ENCODE measurements at regions of chr1 and their contacts with region 1.

Region 1: DNA sequence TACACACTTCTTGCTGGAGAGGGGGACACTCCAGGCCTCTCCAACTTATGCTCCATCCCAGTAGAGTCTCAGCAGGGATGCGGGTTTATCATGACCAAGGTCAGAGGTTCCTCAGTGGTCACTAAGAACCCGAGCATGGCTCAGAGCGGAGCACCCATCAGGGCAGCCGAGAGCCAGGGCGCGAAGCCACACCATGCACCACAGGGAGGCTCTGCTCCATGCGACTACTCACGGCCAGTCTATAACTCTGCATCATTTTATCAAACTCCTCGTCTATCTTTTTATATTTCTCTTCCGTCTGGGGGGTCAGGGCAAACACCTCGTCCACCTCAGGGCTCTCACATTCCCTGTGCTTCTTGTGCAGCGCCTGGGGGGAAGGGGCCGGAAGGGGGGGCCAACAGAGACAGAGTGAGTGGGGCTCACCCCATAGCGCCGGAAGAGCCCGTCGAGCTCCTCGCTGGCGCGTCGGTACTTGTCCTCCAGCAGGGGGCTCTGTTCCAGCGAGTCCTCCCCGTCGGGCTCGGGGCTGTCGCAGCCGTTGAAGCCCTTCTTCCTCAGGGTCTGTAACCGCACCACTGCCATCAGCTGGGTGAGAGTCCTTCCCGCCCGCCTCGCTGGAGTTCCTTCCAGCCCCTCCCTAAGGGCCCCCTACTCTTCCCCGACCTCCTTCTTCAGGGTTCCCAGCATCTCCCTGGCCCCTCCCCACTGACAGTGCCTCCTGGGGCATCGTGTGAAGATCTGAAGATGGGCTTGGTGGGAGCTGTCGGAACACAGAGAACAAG is 20.0 kb downstream of the MEF2D start:
- DNase-seq: peak; percentile 85
- ATAC-seq: peak; percentile 84
- H3K4me3 ChIP-seq: no peak overlapping the region
- H3K4me3 Mint-ChIP-seq: peak overlapping the region; percentile 70
- H3K27ac ChIP-seq: peak overlapping the region; percentile 60 to 72
- H3K27ac Mint-ChIP-seq: peak overlapping the region; percentile 93
- H3K4me1 ChIP-seq: peaks cover 16 to 41% of the 10 kb centered on the region in 2 donors
- H3K4me1 Mint-ChIP-seq: peaks cover 54% of the 10 kb centered on the region
- H3K27me3 ChIP-seq: no peaks in the 10 kb centered on the region
- H3K27me3 Mint-ChIP-seq: no peaks in the 10 kb centered on the region
- CTCF ChIP-seq: peak; percentile 81

Region 2: GRCh38 chr1:156456622-156457465 is 23.8 kb before region 1 on chr1:
- CTCF ChIA-PET with region 1: interaction called, 15 read pairs
- POLR2A ChIA-PET with region 1: no interaction called
- intact Hi-C with region 1: loop called (anchors 1 kb)
- DNase-seq: peak; percentile 98
- ATAC-seq: peak; percentile 85
- H3K4me3 ChIP-seq: peak overlapping the region; percentile 41 to 87 (median 84)
- H3K4me3 Mint-ChIP-seq: peak overlapping the region; percentile 96
- H3K27ac ChIP-seq: peak overlapping the region; percentile 97 to 100
- H3K27ac Mint-ChIP-seq: peak overlapping the region; percentile 98
- H3K4me1 ChIP-seq: peaks cover 3 to 15% of the 10 kb centered on the region in 2 donors
- H3K4me1 Mint-ChIP-seq: peaks cover 17% of the 10 kb centered on the region
- H3K27me3 ChIP-seq: no peaks in the 10 kb centered on the region
- H3K27me3 Mint-ChIP-seq: no peaks in the 10 kb centered on the region
- CTCF ChIP-seq: no peak

Region 3: GRCh38 chr1:156508163-156508887 is 27.7 kb after region 1 on chr1:
- CTCF ChIA-PET with region 1: interaction called, 383 read pairs
- POLR2A ChIA-PET with region 1: interaction called, 193 read pairs
- intact Hi-C with region 1: no loop called
- DNase-seq: peak; percentile 45
- ATAC-seq: no peak
- H3K4me3 ChIP-seq: peak overlapping the region in 1 of 5 experiments; percentile 11
- H3K4me3 Mint-ChIP-seq: peak overlapping the region; percentile 52
- H3K27ac ChIP-seq: peak overlapping the region; percentile 10 to 54
- H3K27ac Mint-ChIP-seq: peak overlapping the region; percentile 42
- H3K4me1 ChIP-seq: peaks cover 25 to 40% of the 10 kb centered on the region in 2 donors
- H3K4me1 Mint-ChIP-seq: peaks cover 49% of the 10 kb centered on the region
- H3K27me3 ChIP-seq: no peaks in the 10 kb centered on the region
- H3K27me3 Mint-ChIP-seq: no peaks in the 10 kb centered on the region
- CTCF ChIP-seq: no peak

Region 4: DNA sequence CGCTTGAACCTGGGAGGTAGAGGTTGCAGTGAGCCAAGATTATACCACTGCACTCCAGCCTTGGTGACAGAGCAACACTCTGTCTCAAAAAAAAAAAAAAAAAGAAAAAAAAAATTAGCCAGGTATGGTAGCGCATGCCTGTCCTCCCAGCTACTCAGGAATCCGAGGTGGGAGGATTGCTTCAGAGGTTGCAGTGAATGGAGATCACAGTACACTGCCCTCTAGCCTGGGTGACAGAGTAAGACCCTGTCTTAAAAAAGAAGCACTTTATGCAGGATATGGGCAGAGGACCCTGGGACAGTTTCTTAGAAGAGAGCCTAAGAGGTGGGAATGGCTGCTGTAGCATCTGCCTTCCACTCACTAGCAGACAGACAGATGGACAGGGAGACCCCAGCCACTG is 68.8 kb after region 1 on chr1:
- CTCF ChIA-PET with region 1: interaction called, 11 read pairs
- POLR2A ChIA-PET with region 1: no interaction called
- intact Hi-C with region 1: no loop called
- DNase-seq: no peak
- ATAC-seq: no peak
- H3K4me3 ChIP-seq: no peak overlapping the region
- H3K4me3 Mint-ChIP-seq: no peak overlapping the region
- H3K27ac ChIP-seq: no peak overlapping the region
- H3K27ac Mint-ChIP-seq: no peak overlapping the region
- H3K4me1 ChIP-seq: peaks cover 38 to 40% of the 10 kb centered on the region in 2 donors
- H3K4me1 Mint-ChIP-seq: peaks cover 39% of the 10 kb centered on the region
- H3K27me3 ChIP-seq: no peaks in the 10 kb centered on the region
- H3K27me3 Mint-ChIP-seq: no peaks in the 10 kb centered on the region
- CTCF ChIP-seq: no peak

Region 5: DNA sequence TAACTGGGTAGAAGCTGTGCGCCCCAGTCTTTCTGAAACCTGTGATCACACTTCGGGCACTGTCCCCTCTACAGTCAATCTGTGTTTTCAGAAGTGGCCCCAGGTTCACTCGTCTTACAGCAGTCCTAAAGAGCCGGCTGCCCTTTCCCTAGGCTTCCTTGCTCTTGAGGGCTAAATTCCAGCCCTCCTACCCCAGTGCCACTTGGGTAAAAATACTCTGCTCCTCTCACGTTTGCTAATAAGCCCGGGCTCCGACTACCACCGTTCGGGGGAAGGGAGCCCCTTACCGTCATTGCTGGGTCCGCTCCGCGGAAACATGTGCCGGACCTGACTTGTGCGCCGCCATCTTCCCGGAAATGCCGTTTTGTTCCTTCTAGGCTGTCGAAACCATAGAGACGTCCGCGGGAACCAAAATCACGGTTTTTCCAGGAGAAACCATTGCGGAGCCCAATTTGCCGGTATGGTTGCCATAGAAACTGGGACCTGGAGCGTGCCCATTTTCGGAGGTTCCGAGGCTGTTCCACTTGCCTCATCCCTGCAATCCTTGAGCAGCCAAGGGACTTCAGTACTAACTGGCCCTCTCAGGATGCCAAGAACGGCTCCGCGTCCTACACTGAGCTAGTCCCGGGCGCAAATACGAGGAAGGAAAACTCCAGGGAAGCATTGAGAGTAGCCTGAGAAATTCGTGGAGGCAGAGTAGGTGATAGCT is 120.7 kb after region 1 on chr1 and contains the start of gene GPATCH4:
- CTCF ChIA-PET with region 1: interaction called, 22 read pairs
- POLR2A ChIA-PET with region 1: interaction called, 3 read pairs
- intact Hi-C with region 1: loop called (anchors 2 kb)
- DNase-seq: peak; percentile 84
- ATAC-seq: peak; percentile 74
- H3K4me3 ChIP-seq: peak within 1 kb of the TSS; percentile 85 to 100 (median 99)
- H3K4me3 Mint-ChIP-seq: peak within 1 kb of the TSS; percentile 97
- H3K27ac ChIP-seq: peak within 1 kb of the TSS; percentile 72 to 83
- H3K27ac Mint-ChIP-seq: peak within 1 kb of the TSS; percentile 96
- H3K4me1 ChIP-seq: peaks cover 22 to 30% of the 10 kb centered on the region in 2 donors
- H3K4me1 Mint-ChIP-seq: peaks cover 38% of the 10 kb centered on the region
- H3K27me3 ChIP-seq: no peaks in the 10 kb centered on the region
- H3K27me3 Mint-ChIP-seq: no peaks in the 10 kb centered on the region
- CTCF ChIP-seq: no peak
- total RNA-seq, gene GPATCH4: 31.4 and 38.3 TPM in 2 replicates